ENCODE measurements at regions of chr1 and their contacts with region 1.

Region 1: GRCh38 chr1:160777486-160778089 is 18.4 kb upstream of the LY9 start:
- DNase-seq: peak; percentile 58
- H3K4me3 Mint-ChIP-seq: no peak overlapping the region
- H3K27ac Mint-ChIP-seq: no peak overlapping the region
- H3K4me1 Mint-ChIP-seq: peaks cover 38% of the 10 kb centered on the region
- H3K27me3 Mint-ChIP-seq: no peaks in the 10 kb centered on the region

Region 2: DNA sequence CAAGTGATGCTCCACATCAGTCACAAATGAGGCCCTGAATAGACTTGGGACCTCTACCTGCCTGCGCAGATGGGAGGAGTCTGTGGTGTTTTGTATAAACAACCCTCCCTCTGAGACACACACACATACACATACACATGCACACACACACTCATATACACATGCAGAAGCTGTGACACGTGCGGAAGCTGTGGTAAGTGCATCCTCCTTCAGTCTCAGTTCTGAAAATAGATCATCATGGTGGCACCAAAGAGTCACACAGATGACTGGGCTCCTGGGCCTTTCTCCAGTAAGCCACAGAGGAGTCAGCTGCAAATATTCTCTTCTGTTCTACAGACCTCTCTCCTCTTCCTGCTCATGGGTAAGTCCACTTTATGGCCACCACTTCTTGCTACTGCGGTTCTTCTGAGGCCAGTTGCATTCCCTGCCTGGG is 18.4 kb after region 1 on chr1 and contains the start of gene LY9:
- CTCF ChIA-PET with region 1: interaction called, 77 read pairs
- POLR2A ChIA-PET with region 1: interaction called, 23 read pairs
- intact Hi-C with region 1: no loop called
- DNase-seq: peak; percentile 90
- H3K4me3 Mint-ChIP-seq: peak within 1 kb of the TSS; percentile 77
- H3K27ac Mint-ChIP-seq: peak within 1 kb of the TSS; percentile 88
- H3K4me1 Mint-ChIP-seq: peaks cover 61% of the 10 kb centered on the region
- H3K27me3 Mint-ChIP-seq: no peaks in the 10 kb centered on the region
- total RNA-seq, gene LY9: 4.8 to 4.9 TPM

Region 3: DNA sequence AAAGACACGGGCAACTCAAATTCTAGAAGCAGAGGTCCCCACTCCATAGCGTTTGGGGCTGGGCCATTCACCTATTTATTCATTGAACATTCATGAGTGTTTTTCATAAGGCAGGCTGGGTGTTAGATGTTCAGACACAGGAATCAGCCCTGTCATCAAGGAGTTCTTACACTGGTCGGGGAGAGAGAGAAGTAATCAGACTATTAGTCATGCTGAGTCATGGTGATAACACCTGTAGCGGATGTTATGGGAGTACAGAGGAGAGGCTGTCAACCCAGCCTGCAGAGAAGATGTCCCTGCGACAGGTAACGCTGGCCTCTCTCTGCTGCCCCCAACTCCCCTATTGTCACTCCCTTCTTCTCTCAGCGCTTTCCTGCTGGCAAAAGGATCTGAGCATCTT is 35.6 kb after region 1 on chr1:
- CTCF ChIA-PET with region 1: interaction called, 46 read pairs
- POLR2A ChIA-PET with region 1: no interaction called
- intact Hi-C with region 1: loop called (anchors 5 kb)
- DNase-seq: peak; percentile 33
- H3K4me3 Mint-ChIP-seq: no peak overlapping the region
- H3K27ac Mint-ChIP-seq: no peak overlapping the region
- H3K4me1 Mint-ChIP-seq: peaks cover 38% of the 10 kb centered on the region
- H3K27me3 Mint-ChIP-seq: no peaks in the 10 kb centered on the region

Region 4: GRCh38 chr1:160830321-160831153 is 52.9 kb after region 1 on chr1:
- CTCF ChIA-PET with region 1: interaction called, 150 read pairs
- POLR2A ChIA-PET with region 1: no interaction called
- intact Hi-C with region 1: loop called (anchors 1 kb)
- DNase-seq: peak; percentile 86
- H3K4me3 Mint-ChIP-seq: no peak overlapping the region
- H3K27ac Mint-ChIP-seq: no peak overlapping the region
- H3K4me1 Mint-ChIP-seq: peaks cover 12% of the 10 kb centered on the region
- H3K27me3 Mint-ChIP-seq: no peaks in the 10 kb centered on the region

Region 5: DNA sequence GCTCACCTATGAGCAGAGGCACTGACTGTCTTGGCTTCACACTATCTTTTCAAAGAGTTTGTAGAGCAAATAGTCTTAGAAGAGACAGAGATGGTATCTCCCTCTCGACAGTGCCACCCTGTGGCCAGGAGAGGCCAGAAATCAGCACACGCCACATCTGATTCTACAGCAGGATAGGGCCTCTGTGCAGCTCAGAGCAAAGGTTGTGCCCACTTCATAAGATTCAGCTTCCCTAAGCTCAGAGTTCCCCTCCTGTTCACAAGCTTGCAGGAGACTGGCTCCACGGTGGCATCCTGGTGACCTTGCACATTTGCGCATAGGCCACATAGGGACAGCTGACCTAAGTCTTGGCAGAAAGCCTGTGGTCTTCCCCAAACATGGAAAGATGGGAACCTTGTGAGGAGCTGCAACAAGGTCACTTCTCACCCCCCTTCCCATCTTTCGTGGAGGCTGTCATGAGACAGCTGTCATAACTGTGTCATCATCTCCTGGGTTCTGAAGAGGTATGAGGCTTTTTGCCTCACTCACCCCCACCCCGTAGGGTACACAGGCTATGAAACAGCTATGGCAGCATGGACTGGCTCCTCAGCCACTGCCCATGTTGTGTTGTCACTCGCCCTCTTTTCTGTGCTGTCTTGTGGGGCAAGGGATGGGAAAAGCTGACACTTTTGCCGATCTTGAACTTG is 174.0 kb after region 1 on chr1:
- CTCF ChIA-PET with region 1: interaction called, 154 read pairs
- POLR2A ChIA-PET with region 1: no interaction called
- intact Hi-C with region 1: loop called (anchors 1 kb)
- DNase-seq: peak; percentile 81
- H3K4me3 Mint-ChIP-seq: no peak overlapping the region
- H3K27ac Mint-ChIP-seq: no peak overlapping the region
- H3K4me1 Mint-ChIP-seq: peaks cover 2% of the 10 kb centered on the region
- H3K27me3 Mint-ChIP-seq: no peaks in the 10 kb centered on the region

Measured in activated CD4-positive, alpha-beta memory T cell treated with anti-CD3 and anti-CD28 coated beads for 36 hours (primary cell).